Colonic mucosa (tissue), 4 donors: ENCODE measurements at regions of chr6 and their contacts with region 1.

Region 1: DNA sequence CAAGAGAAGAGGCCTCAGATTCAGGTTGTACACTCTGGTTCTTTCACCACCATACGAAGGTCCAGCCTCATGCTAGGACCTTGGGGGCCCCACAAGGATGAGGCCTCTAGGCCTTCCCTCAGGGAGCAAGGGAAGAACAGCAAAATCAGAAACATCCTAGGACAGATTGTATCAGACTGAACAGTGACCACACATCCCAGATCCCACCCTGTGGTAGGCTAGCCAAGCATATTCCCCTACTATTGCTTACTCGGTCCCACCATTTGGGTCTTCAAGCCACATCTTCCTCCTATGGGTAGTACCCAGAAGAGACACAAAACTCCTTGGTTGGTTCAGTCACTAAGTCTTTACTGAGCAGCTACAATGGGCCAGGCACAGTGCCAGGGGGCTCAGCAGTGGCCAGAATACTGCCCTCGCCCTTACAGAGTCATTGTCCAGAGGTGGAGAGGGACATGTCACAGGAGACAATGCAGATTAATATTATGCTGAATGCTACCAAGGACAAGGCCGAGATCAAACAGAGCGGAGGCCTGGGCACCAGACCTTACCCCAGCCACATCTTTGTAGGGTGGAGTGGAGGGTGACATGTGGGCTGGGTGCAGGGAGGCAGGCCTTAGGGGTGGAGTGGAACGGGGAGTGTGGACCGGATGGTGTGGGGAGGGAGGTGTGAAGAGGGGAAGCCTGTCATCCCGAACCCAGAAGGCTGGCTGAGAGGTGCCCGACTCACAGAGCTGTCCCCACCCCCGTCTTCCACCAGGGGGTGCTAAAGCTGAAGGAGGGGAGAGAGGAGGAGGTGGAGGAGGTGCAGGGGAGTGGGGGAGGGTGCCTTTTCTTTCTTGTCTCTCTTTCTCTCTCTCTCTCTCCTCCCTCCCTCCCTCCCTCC is 6.8 kb upstream of the MAPK13 start:
- DNase-seq: peak; percentile 94
- H3K4me3 ChIP-seq: no peak overlapping the region
- H3K27ac ChIP-seq: no peak overlapping the region
- H3K4me1 ChIP-seq: peaks cover 4% of the 10 kb centered on the region
- H3K27me3 ChIP-seq: no peaks in the 10 kb centered on the region
- CTCF ChIP-seq: peak; percentile 60

Region 2: GRCh38 chr6:36196880-36197548 is 73.5 kb after region 1 on chr6:
- intact Hi-C with region 1: loop called (anchors 2 kb)
- DNase-seq: peak; percentile 100
- H3K4me3 ChIP-seq: peak overlapping the region; percentile 53
- H3K27ac ChIP-seq: peak overlapping the region; percentile 85
- H3K4me1 ChIP-seq: peaks cover 3% of the 10 kb centered on the region
- H3K27me3 ChIP-seq: no peaks in the 10 kb centered on the region
- CTCF ChIP-seq: no peak

Region 3: GRCh38 chr6:36302227-36302976 is 178.9 kb after region 1 on chr6:
- intact Hi-C with region 1: loop called (anchors 10 kb)
- DNase-seq: peak; percentile 96
- H3K4me3 ChIP-seq: no peak overlapping the region
- H3K27ac ChIP-seq: no peak overlapping the region
- H3K4me1 ChIP-seq: no peaks in the 10 kb centered on the region
- H3K27me3 ChIP-seq: no peaks in the 10 kb centered on the region
- CTCF ChIP-seq: peak; percentile 94

Region 4: GRCh38 chr6:36360241-36361054 is 236.9 kb after region 1 on chr6:
- intact Hi-C with region 1: loop called (anchors 5 kb)
- DNase-seq: peak; percentile 81
- H3K4me3 ChIP-seq: no peak overlapping the region
- H3K27ac ChIP-seq: no peak overlapping the region
- H3K4me1 ChIP-seq: no peaks in the 10 kb centered on the region
- H3K27me3 ChIP-seq: no peaks in the 10 kb centered on the region
- CTCF ChIP-seq: peak; percentile 78